ENCODE measurements at regions of chr1 and their contacts with region 1.

Region 1: GRCh38 chr1:204257954-204258752 is 44.4 kb upstream of the GOLT1A start:
- DNase-seq: peak; percentile 53 to 79 (median 66)
- ATAC-seq: peak; percentile 48 to 72 (median 65)
- H3K4me3 ChIP-seq: no peak overlapping the region
- H3K27ac ChIP-seq: no peak overlapping the region
- H3K4me1 ChIP-seq: peaks cover 0 to 15% (median 3%) of the 10 kb centered on the region in 12 donors
- H3K27me3 ChIP-seq: no peaks in the 10 kb centered on the region
- CTCF ChIP-seq: peak; percentile 60 to 80 (median 65)
- POLR2A ChIP-seq: no peak

Region 2: GRCh38 chr1:204307334-204307883 is 49.3 kb after region 1 on chr1:
- intact Hi-C with region 1: loop called in 3 of 10 experiments (anchors 1 to 10 kb)
- DNase-seq: peak in 4 of 5 donors; percentile 35 to 67 (median 40)
- ATAC-seq: peak; percentile 76 to 92 (median 88)
- H3K4me3 ChIP-seq: peak overlapping the region in 9 of 12 donors; percentile 3 to 52 (median 32)
- H3K27ac ChIP-seq: peak overlapping the region in 5 of 12 donors; percentile 1 to 52 (median 40)
- H3K4me1 ChIP-seq: peaks cover 0 to 19% (median 2%) of the 10 kb centered on the region in 12 donors
- H3K27me3 ChIP-seq: no peaks in the 10 kb centered on the region
- CTCF ChIP-seq: peak in 8 of 12 donors; percentile 4 to 53 (median 34)
- POLR2A ChIP-seq: no peak

Region 3: GRCh38 chr1:204506961-204507387 is 248.8 kb after region 1 on chr1:
- intact Hi-C with region 1: loop called in 1 of 10 experiments (anchors 10 kb)
- DNase-seq: peak in 4 of 5 donors; percentile 72 to 83 (median 78)
- ATAC-seq: peak; percentile 77 to 89 (median 82)
- H3K4me3 ChIP-seq: peak overlapping the region; percentile 5 to 76 (median 60)
- H3K27ac ChIP-seq: peak overlapping the region; percentile 70 to 89 (median 84)
- H3K4me1 ChIP-seq: peaks cover 0 to 34% (median 7%) of the 10 kb centered on the region in 12 donors
- H3K27me3 ChIP-seq: no peaks in the 10 kb centered on the region
- CTCF ChIP-seq: no peak
- POLR2A ChIP-seq: peak in 1 of 2 donors; percentile 7

Measured in heart left ventricle (tissue), 16 donors.